ENCODE measurements at regions of chr2 and their contacts with region 1.

Region 1: GRCh38 chr2:230234845-230235244 is 9.3 kb downstream of the SP140 start:
- DNase-seq: no peak
- H3K4me3 Mint-ChIP-seq: no peak overlapping the region
- H3K27ac Mint-ChIP-seq: peak overlapping the region; percentile 77
- H3K4me1 Mint-ChIP-seq: peaks cover 46% of the 10 kb centered on the region
- H3K27me3 Mint-ChIP-seq: no peaks in the 10 kb centered on the region

Region 2: DNA sequence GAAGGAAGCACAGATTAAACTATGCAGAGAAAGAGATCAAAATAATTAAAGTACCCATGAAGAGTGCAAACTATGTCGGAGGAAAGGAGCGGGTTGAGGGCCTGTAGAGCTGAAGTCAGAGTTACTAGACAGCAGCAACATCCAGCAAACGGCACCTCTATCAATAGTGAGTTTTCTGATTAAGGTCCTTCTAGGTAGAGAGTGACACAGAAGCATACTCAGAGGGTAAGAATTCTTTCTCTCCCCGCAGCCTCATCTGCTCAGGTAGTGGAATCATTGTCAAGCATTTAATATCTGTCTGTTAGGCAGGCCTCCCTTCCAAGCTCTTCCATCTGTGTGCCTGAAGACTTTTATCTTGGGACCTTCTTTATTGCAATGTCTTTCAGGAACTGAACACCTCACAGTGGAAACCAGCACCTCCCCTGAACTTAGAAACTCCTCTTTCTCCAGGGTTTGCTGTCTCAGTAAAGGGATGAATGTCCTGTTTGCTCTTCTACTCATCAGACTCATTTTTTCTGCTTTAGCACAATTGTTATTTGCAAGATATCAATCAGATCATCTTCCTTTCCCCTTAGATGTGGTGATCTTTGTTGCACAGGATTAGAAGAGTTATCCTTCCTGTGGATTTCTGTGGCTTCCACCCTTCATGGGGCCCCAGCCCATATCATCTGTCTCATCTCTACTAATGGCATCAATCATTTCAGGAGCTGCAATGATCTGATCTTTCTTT is 19.5 kb after region 1 on chr2:
- CTCF ChIA-PET with region 1: no interaction called
- intact Hi-C with region 1: loop called (anchors 1 kb)
- DNase-seq: peak; percentile 78
- H3K4me3 Mint-ChIP-seq: no peak overlapping the region
- H3K27ac Mint-ChIP-seq: no peak overlapping the region
- H3K4me1 Mint-ChIP-seq: peaks cover 13% of the 10 kb centered on the region
- H3K27me3 Mint-ChIP-seq: no peaks in the 10 kb centered on the region

Region 3: GRCh38 chr2:230286048-230286447 is 51.2 kb after region 1 on chr2:
- CTCF ChIA-PET with region 1: no interaction called
- intact Hi-C with region 1: no loop called
- DNase-seq: no peak
- H3K4me3 Mint-ChIP-seq: no peak overlapping the region
- H3K27ac Mint-ChIP-seq: no peak overlapping the region
- H3K4me1 Mint-ChIP-seq: peaks cover 7% of the 10 kb centered on the region
- H3K27me3 Mint-ChIP-seq: no peaks in the 10 kb centered on the region